CD4-positive, alpha-beta memory T cell (primary cell): ENCODE measurements at regions of chr5 and their contacts with region 1.

Region 1: GRCh38 chr5:176415952-176416924 is at the start of gene CLTB:
- DNase-seq: peak; percentile 83 to 85 (median 84)
- H3K4me3 ChIP-seq: peak within 1 kb of the TSS; percentile 68 to 69
- H3K4me3 Mint-ChIP-seq: peak within 1 kb of the TSS; percentile 83 to 92 (median 88)
- H3K27ac ChIP-seq: peak within 1 kb of the TSS; percentile 77
- H3K27ac Mint-ChIP-seq: peak within 1 kb of the TSS; percentile 85 to 95 (median 91)
- H3K4me1 ChIP-seq: peaks cover 39% of the 10 kb centered on the region
- H3K4me1 Mint-ChIP-seq: peaks cover 27 to 51% (median 39%) of the 10 kb centered on the region in 4 donors
- H3K27me3 ChIP-seq: no peaks in the 10 kb centered on the region
- H3K27me3 Mint-ChIP-seq: peaks cover 0 to 4% of the 10 kb centered on the region in 2 donors
- total RNA-seq, gene CLTB: 34.8 to 40.5 TPM

Region 2: DNA sequence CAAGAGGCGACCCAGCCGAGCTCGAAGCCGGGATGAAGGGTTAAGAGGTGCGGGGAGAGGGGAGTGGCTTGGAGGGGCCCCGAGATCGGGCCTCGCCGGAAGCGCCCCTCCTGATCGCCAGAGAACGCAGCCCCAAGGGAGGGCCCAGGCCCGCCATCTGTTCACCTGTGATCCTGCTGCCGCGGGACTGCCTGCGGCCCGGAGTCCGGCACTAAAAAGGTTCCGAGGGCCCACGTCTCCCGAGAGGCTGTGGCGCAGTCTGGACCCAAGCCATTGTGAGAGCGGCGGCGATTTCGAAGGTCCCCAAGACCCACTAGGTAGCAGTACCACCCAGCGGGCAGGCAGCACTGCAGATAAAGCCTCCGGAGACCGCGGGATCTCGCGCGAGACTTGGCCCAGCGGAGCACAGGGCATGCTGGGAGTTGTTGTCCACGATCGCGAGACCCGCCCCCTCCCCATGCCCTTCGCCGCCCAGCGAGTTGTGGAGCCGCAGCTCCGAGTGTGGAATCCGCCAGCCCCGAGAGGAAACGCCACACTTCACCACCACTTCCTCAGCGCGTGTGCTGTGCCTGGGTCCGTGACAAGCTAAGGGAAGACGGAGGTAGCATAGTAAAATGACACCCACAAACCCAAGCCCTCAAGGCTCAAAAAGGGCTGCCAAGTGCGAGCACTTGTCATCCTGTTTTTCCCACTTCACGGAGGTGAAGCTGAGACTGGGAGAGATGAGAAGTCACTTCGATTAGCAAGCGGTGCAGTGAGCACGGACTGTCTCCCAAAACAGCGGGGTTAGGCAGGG is 54.6 kb before region 1 on chr5 and contains the start of gene KIAA1191:
- CTCF ChIA-PET with region 1: no interaction called
- POLR2A ChIA-PET with region 1: interaction called, 11 read pairs
- intact Hi-C with region 1: loop called (anchors 2 kb)
- DNase-seq: peak; percentile 93 to 97 (median 94)
- H3K4me3 ChIP-seq: peak within 1 kb of the TSS; percentile 91 to 97
- H3K4me3 Mint-ChIP-seq: peak within 1 kb of the TSS; percentile 97 to 99 (median 98)
- H3K27ac ChIP-seq: peak within 1 kb of the TSS; percentile 78
- H3K27ac Mint-ChIP-seq: peak within 1 kb of the TSS; percentile 92 to 98 (median 97)
- H3K4me1 ChIP-seq: peaks cover 39% of the 10 kb centered on the region
- H3K4me1 Mint-ChIP-seq: peaks cover 27 to 57% (median 42%) of the 10 kb centered on the region in 4 donors
- H3K27me3 ChIP-seq: no peaks in the 10 kb centered on the region
- H3K27me3 Mint-ChIP-seq: no peaks in the 10 kb centered on the region
- total RNA-seq, gene KIAA1191: 73.3 to 76.6 TPM

Region 3: GRCh38 chr5:176381423-176381822 is 34.8 kb before region 1 on chr5:
- CTCF ChIA-PET with region 1: no interaction called
- POLR2A ChIA-PET with region 1: no interaction called
- intact Hi-C with region 1: no loop called
- DNase-seq: no peak
- H3K4me3 ChIP-seq: no peak overlapping the region
- H3K4me3 Mint-ChIP-seq: no peak overlapping the region
- H3K27ac ChIP-seq: no peak overlapping the region
- H3K27ac Mint-ChIP-seq: no peak overlapping the region
- H3K4me1 ChIP-seq: peaks cover 3% of the 10 kb centered on the region
- H3K4me1 Mint-ChIP-seq: peaks cover 2 to 11% (median 5%) of the 10 kb centered on the region in 4 donors
- H3K27me3 ChIP-seq: no peaks in the 10 kb centered on the region
- H3K27me3 Mint-ChIP-seq: no peaks in the 10 kb centered on the region

Region 4: DNA sequence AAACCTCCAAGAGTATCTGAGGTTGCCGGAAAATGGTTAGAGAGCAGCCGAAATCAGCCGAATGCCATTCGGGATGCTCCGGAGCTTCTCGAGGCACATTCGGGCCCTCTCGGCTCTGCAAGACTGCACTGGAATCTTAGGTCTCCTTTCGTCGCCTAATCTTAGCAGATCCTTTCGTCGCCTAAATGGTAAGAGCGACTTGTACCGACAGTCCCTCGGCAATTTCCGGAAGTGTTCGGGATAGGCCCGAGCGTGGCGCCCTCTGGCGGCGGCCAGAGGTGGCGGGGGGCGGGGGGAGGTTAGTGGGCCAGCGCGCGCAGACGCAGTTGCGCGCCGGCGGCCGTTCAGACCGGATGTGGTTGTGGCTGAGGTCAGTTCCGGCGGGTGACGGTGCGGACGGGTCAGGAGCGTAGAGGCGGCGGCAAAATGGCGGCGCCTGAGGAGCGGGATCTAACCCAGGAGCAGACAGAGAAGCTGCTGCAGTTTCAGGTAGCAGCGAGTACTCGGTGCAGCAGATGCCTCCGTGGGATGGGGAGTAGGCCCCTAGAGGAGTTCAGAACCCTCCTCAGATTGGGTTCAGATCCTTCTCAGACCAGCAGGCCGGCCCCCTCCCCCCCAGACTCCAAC is 31.9 kb after region 1 on chr5 and contains the start of gene FAF2:
- CTCF ChIA-PET with region 1: interaction called, 26 read pairs
- POLR2A ChIA-PET with region 1: interaction called, 27 read pairs
- intact Hi-C with region 1: loop called (anchors 1 kb)
- DNase-seq: peak; percentile 97 to 100 (median 99)
- H3K4me3 ChIP-seq: peak within 1 kb of the TSS; percentile 95 to 100
- H3K4me3 Mint-ChIP-seq: peak within 1 kb of the TSS; percentile 97 to 100 (median 98)
- H3K27ac ChIP-seq: peak within 1 kb of the TSS; percentile 98
- H3K27ac Mint-ChIP-seq: peak within 1 kb of the TSS; percentile 98 to 100 (median 99)
- H3K4me1 ChIP-seq: peaks cover 42% of the 10 kb centered on the region
- H3K4me1 Mint-ChIP-seq: peaks cover 21 to 51% (median 36%) of the 10 kb centered on the region in 4 donors
- H3K27me3 ChIP-seq: no peaks in the 10 kb centered on the region
- H3K27me3 Mint-ChIP-seq: peaks cover 0 to 2% of the 10 kb centered on the region in 2 donors
- total RNA-seq, gene FAF2: 32.3 to 33.6 TPM

Region 5: GRCh38 chr5:176543428-176544173 is 127.4 kb after region 1 on chr5:
- CTCF ChIA-PET with region 1: interaction called, 26 read pairs
- POLR2A ChIA-PET with region 1: interaction called, 84 read pairs
- intact Hi-C with region 1: loop called (anchors 1 kb)
- DNase-seq: peak; percentile 75 to 79 (median 78)
- H3K4me3 ChIP-seq: peak overlapping the region; percentile 65 to 69
- H3K4me3 Mint-ChIP-seq: peak overlapping the region; percentile 89 to 95 (median 92)
- H3K27ac ChIP-seq: peak overlapping the region; percentile 83
- H3K27ac Mint-ChIP-seq: peak overlapping the region; percentile 89 to 97 (median 96)
- H3K4me1 ChIP-seq: peaks cover 69% of the 10 kb centered on the region
- H3K4me1 Mint-ChIP-seq: peaks cover 45 to 82% (median 57%) of the 10 kb centered on the region in 4 donors
- H3K27me3 ChIP-seq: no peaks in the 10 kb centered on the region
- H3K27me3 Mint-ChIP-seq: no peaks in the 10 kb centered on the region

Region 6: DNA sequence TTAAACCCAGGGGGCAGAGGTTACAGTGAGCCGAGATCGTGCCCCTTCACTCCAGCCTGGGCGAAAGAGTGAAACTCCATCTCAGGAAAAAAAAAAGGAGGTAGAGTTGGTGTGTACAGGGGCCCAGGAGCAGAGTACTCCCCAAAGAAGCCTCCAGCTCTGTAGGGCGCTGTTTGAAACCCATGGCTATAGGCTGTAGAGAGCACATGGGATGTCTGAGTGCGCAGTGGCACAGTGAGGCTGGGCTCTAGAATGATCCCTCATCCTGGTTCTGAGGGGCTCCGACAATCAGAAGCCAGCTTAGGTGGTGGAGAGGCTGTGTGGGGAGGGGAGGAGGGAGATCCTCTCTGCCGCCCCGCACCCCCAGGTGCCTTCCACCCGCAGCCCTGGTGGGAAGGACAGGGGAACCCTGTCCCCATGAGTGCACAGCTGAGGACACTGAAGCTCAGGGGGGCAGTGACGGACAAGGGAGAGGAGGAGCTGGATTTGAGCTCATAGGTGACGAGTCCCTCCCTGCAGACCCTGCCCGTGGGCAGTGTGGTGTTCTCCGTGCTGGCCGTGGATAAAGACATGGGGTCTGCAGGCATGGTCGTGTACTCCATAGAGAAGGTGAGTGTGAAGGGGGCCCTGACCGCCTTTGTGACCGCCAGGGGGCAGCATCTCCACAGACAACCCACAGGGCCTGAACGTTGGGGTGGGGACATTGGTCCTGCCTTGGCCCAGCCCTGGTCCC is 157.5 kb after region 1 on chr5:
- CTCF ChIA-PET with region 1: interaction called, 34 read pairs
- POLR2A ChIA-PET with region 1: interaction called, 4 read pairs
- intact Hi-C with region 1: loop called (anchors 1 kb)
- DNase-seq: peak; percentile 62 to 71 (median 67)
- H3K4me3 ChIP-seq: no peak overlapping the region
- H3K4me3 Mint-ChIP-seq: no peak overlapping the region
- H3K27ac ChIP-seq: no peak overlapping the region
- H3K27ac Mint-ChIP-seq: no peak overlapping the region
- H3K4me1 ChIP-seq: peaks cover 6% of the 10 kb centered on the region
- H3K4me1 Mint-ChIP-seq: peaks cover 4 to 16% (median 8%) of the 10 kb centered on the region in 4 donors
- H3K27me3 ChIP-seq: no peaks in the 10 kb centered on the region
- H3K27me3 Mint-ChIP-seq: peaks cover 3 to 9% of the 10 kb centered on the region in 2 donors

Region 7: DNA sequence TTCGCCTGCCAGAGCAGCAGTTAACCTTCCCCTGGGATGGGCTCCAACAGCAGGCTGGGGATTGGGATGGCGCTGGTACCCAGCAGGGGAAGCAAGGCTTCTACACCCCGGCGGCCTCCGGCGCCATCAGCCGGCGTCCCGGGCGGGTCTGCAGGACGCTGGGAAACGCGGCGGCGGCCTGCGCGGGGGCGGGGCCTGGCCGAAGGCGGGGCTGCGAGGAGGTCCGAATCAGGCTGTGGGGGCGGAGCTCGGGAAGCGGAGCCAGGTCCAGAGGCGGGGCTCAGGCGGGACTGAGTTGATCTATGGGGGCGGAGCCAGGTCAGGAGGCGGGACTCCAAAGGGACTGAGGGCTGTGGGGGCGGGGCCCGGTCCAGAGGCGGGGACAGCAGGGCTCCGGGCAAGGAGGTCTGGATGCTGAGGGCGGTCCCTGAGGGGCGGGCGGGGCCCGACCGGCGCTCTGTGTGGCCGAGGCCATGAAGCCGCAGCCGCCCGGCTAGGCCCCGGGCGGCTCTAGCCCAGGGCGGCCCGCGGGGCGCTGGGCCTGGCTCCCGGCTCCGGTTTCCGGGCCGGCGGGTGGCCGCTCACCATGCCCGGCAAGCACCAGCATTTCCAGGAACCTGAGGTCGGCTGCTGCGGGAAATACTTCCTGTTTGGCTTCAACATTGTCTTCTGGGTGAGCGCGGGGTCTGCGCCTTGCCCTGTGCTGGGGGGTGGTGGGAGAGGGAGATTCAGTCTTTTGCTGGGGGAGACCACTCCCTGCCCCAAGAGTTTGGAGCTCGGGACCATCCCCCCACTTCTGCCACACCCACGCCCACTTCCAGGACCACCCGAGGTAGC is 231.0 kb after region 1 on chr5 and contains the start of gene TSPAN17:
- CTCF ChIA-PET with region 1: no interaction called
- POLR2A ChIA-PET with region 1: interaction called, 5 read pairs
- intact Hi-C with region 1: loop called (anchors 1 kb)
- DNase-seq: peak; percentile 94 to 97 (median 95)
- H3K4me3 ChIP-seq: peak within 1 kb of the TSS; percentile 73 to 76
- H3K4me3 Mint-ChIP-seq: peak within 1 kb of the TSS; percentile 85 to 94 (median 90)
- H3K27ac ChIP-seq: peak within 1 kb of the TSS; percentile 62
- H3K27ac Mint-ChIP-seq: peak within 1 kb of the TSS; percentile 80 to 95 (median 93)
- H3K4me1 ChIP-seq: peaks cover 50% of the 10 kb centered on the region
- H3K4me1 Mint-ChIP-seq: peaks cover 31 to 69% (median 43%) of the 10 kb centered on the region in 4 donors
- H3K27me3 ChIP-seq: no peaks in the 10 kb centered on the region
- H3K27me3 Mint-ChIP-seq: no peaks in the 10 kb centered on the region
- total RNA-seq, gene TSPAN17: 27.4 to 30.7 TPM